Activated CD8-positive, alpha-beta T cell treated with anti-CD3 and anti-CD28 coated beads for 36 hours (primary cell): ENCODE measurements at regions of chr1 and their contacts with region 1.

Region 1: DNA sequence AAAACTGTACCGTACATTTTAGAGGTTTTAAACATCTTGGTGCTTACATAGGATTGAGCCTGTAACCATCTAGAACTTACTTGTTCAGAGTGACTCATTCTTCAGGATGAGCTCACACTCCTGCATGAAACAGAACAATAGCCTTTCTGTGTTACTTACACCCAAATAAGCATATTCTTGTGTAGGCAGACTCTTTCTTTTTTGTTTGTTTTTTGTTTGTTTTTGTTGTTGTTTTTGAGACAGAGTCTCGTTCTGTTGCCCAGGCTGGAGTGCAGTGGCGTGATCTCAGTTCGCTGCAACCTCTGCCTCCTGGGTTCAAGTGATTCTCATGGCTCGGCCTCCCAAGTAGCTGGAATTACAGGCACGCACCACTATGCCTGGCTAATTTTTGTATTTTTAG is 3.8 kb upstream of the CA6 start:
- DNase-seq: no peak
- ATAC-seq: peak; percentile 54
- H3K4me3 Mint-ChIP-seq: no peak overlapping the region
- H3K27ac Mint-ChIP-seq: peak overlapping the region; percentile 98
- H3K4me1 Mint-ChIP-seq: peaks cover 89% of the 10 kb centered on the region
- H3K27me3 Mint-ChIP-seq: no peaks in the 10 kb centered on the region
- CTCF ChIP-seq: no peak

Region 2: GRCh38 chr1:8925406-8925805 is 16.5 kb before region 1 on chr1:
- CTCF ChIA-PET with region 1: interaction called, 7 read pairs
- POLR2A ChIA-PET with region 1: interaction called, 99 read pairs
- intact Hi-C with region 1: no loop called
- DNase-seq: no peak
- ATAC-seq: no peak
- H3K4me3 Mint-ChIP-seq: no peak overlapping the region
- H3K27ac Mint-ChIP-seq: no peak overlapping the region
- H3K4me1 Mint-ChIP-seq: peaks cover 28% of the 10 kb centered on the region
- H3K27me3 Mint-ChIP-seq: no peaks in the 10 kb centered on the region
- CTCF ChIP-seq: no peak

Region 3: DNA sequence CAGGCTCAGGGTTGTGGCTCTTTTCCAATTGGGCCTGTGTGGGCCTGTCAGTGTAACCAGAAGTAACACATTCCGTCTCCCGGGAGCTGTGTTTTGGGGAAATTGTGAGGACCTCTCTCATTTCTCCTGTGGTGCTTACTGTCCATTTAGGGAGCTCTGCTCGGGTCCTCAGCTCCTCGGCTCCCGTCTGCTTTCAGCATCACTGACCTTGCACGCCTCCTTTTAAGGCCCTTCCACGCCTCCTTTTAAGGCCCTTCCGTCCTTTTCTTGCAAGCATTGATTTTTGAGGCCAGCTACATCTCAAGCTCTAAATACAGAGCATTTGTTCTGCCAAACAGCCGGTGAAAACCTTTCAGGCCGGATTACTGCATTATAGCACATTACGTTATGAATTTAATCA is 13.5 kb after region 1 on chr1:
- CTCF ChIA-PET with region 1: interaction called, 8 read pairs
- POLR2A ChIA-PET with region 1: interaction called, 48 read pairs
- intact Hi-C with region 1: no loop called
- DNase-seq: no peak
- ATAC-seq: no peak
- H3K4me3 Mint-ChIP-seq: no peak overlapping the region
- H3K27ac Mint-ChIP-seq: peak overlapping the region; percentile 4
- H3K4me1 Mint-ChIP-seq: peaks cover 53% of the 10 kb centered on the region
- H3K27me3 Mint-ChIP-seq: no peaks in the 10 kb centered on the region
- CTCF ChIP-seq: no peak